ENCODE measurements at regions of chr6 and their contacts with region 1.

Region 1: GRCh38 chr6:125363039-125363823 is 61.5 kb upstream of the HDDC2 start:
- DNase-seq: peak; percentile 78

Region 2: DNA sequence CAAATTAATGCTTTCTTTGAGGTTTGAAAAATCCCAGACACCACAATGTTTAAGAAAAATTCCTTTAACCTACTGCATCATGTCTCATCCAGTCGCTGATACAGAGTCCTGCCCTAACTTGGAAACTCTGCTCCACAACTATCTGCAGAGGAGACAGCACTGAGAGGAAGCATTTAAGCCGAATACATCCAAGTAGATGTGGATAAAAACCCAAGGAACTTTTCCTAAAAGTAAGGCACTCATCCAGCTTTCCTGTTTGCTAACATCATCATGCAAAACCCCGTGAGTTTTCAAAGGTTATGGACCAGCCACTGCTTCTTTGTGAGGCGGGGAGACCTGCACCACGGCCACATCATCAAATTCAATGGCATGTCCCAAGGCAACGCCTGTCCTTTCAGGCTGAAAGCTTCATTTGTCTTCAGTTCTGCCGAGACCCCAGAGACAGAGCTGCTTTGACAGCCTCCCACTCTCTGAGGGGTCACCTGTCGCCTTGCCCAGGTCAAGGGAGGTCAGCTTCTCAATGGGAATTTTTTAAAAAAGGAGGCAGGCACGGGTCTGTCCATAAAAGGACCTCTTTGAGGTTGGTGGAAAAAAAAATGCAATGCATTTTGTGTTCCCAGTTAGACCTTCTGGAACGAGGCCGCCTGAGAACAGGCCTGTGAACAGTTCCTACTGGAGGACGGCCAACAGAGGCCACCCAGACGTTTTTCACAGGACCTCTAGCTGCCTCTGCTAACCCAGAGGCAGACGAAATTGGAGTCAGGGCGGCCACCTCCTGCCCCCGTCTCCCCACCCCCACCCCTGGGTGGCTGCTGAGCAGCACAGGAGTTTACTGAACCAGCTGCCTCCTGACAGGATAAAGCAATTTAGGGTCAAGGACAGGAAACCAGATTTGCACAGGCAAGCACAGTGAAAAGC is 81.0 kb after region 1 on chr6:
- intact Hi-C with region 1: loop called (anchors 1 kb)
- DNase-seq: no peak

Region 3: DNA sequence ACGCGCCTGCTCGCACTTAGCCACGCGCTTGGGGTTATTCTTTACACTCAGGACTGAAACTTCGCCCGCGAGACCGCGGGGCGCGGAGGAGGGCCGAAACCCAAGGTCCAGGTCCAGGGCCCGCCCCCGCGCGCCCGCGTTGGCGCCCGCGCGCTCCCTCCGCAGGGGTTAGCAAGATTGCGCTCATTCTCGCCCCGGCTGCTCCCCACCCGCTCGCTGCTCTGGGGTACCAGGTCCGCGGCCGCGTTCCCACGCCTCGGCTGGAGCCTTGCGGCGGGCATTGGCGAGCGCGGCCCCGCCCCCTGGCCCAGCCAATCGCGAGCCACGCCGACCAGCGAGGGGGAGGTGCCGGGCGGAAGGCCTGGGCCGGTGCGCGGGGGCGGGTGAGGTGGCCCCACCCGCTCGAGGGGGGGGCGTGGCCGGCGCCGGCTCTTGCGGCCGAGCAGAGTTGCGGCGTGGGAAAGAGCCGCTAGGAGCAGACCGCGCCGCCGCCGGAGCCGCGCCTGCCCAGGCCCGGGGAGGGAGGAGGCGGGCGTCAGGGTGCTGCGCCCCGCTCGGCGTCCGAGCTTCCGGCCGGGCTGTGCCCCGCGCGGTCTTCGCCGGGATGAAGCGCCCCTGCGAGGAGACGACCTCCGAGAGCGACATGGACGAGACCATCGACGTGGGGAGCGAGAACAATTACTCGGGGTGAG is 386.1 kb after region 1 on chr6 and contains the start of gene HEY2:
- intact Hi-C with region 1: loop called (anchors 5 kb)
- DNase-seq: peak; percentile 97
- total RNA-seq, gene HEY2: 12.3 TPM